ENCODE measurements at regions of chr1 and their contacts with region 1.

Region 1: GRCh38 chr1:184664042-184664655 is 90.5 kb downstream of the EDEM3 start:
- H3K4me3 Mint-ChIP-seq: peak overlapping the region; percentile 71
- H3K27ac Mint-ChIP-seq: peak overlapping the region; percentile 25
- H3K4me1 Mint-ChIP-seq: peaks cover 10% of the 10 kb centered on the region
- H3K27me3 Mint-ChIP-seq: peaks cover 12% of the 10 kb centered on the region

Region 2: GRCh38 chr1:184222652-184223052 is 441.5 kb before region 1 on chr1:
- intact Hi-C with region 1: loop called (anchors 5 kb)
- H3K4me3 Mint-ChIP-seq: no peak overlapping the region
- H3K27ac Mint-ChIP-seq: no peak overlapping the region
- H3K4me1 Mint-ChIP-seq: peaks cover 8% of the 10 kb centered on the region
- H3K27me3 Mint-ChIP-seq: no peaks in the 10 kb centered on the region

Region 3: DNA sequence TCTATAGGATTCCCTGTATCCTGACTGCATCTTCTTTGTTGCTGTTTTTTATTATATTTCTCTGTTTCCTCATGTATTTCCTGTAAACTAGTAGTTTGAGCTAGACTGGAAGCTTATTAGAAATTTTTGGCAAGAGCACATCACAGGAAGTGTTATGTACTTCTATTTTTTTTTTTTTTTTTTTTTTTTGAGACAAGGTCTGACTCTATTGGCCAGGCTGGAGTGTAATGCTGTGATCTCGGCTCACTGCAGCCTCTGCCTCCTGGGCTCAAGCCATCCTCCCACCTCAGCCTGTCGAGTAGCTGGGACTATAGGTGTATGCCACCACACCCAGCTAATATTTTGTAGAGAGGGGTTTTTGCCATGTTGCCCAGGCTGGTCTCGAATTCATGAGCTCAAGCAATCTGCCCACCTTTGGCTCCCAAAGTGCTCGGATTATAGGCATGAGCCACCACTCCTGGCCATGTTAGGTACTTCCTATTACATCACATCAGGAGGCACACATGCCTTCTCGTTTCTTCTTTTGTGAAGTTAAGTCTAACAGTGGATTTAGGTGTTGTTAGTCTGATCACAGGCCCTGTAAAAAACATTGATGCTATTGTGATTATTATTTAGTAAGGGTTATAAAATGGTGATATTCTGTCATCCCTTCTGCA is 264.8 kb before region 1 on chr1:
- intact Hi-C with region 1: loop called (anchors 10 kb)
- H3K4me3 Mint-ChIP-seq: no peak overlapping the region
- H3K27ac Mint-ChIP-seq: no peak overlapping the region
- H3K4me1 Mint-ChIP-seq: peaks cover 7% of the 10 kb centered on the region
- H3K27me3 Mint-ChIP-seq: no peaks in the 10 kb centered on the region

Region 4: GRCh38 chr1:184563308-184563707 is 100.8 kb before region 1 on chr1:
- intact Hi-C with region 1: loop called (anchors 5 kb)
- H3K4me3 Mint-ChIP-seq: no peak overlapping the region
- H3K27ac Mint-ChIP-seq: no peak overlapping the region
- H3K4me1 Mint-ChIP-seq: peaks cover 20% of the 10 kb centered on the region
- H3K27me3 Mint-ChIP-seq: no peaks in the 10 kb centered on the region

Measured in dendritic cell treated with granulocyte-macrophage colony-stimulating factor and Interleukin-4, amounts not matched to agents 40 ng/mL and 50 ng/mL, for 4 days (primary cell).